ENCODE measurements at regions of chr10 and their contacts with region 1.

Region 1: DNA sequence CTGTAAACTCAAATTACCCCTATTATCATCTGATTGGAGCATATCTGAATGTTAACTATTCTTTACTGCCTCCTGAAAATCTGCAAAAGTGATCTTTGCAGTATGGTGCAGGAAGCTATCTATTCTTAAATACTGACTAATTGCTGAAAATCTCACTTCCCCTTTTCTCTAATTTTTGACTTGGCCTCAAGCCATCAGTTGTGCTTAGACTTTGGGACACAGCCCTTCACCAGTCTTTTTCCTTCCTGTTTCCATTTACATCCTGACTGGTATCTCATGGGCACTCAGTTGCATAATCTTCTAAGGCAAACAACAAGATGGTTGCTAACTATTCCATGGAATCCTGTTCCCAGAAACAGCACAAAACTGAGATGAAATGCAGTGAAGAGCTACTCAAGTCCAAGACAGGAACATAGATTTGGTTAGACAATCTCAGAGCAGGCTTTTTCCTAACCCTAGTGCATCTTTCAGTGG is 228.5 kb downstream of the SORCS1 start:
- DNase-seq: peak; percentile 93
- ATAC-seq: peak; percentile 75
- H3K4me3 ChIP-seq: no peak overlapping the region; the same call in 1 of the 2 replicates
- H3K27ac ChIP-seq: peak overlapping the region; percentile 67
- H3K4me1 ChIP-seq: peaks cover 42% of the 10 kb centered on the region
- H3K27me3 ChIP-seq: no peaks in the 10 kb centered on the region
- CTCF ChIP-seq: no peak
- EP300 ChIP-seq: peak; percentile 38 to 97; a peak in 3 of 4 replicates
- POLR2A ChIP-seq: no peak
- RAD21 ChIP-seq: no peak

Region 2: GRCh38 chr10:106519376-106520030 is 416.5 kb before region 1 on chr10:
- CTCF ChIA-PET with region 1: no interaction called
- POLR2A ChIA-PET with region 1: no interaction called
- RAD21 ChIA-PET with region 1: no interaction called
- SMC1A ChIA-PET with region 1: no interaction called
- in situ Hi-C with region 1: no loop called
- intact Hi-C with region 1: no loop called
- DNase-seq: no peak
- ATAC-seq: no peak
- H3K4me3 ChIP-seq: no peak overlapping the region
- H3K27ac ChIP-seq: no peak overlapping the region
- H3K4me1 ChIP-seq: no peaks in the 10 kb centered on the region
- H3K27me3 ChIP-seq: no peaks in the 10 kb centered on the region
- CTCF ChIP-seq: no peak
- EP300 ChIP-seq: no peak
- POLR2A ChIP-seq: no peak
- RAD21 ChIP-seq: no peak

Region 3: GRCh38 chr10:106866244-106866845 is 69.7 kb before region 1 on chr10:
- CTCF ChIA-PET with region 1: interaction called, 13 read pairs
- POLR2A ChIA-PET with region 1: no interaction called
- RAD21 ChIA-PET with region 1: interaction called, 16 read pairs
- SMC1A ChIA-PET with region 1: interaction called, 17 read pairs
- in situ Hi-C with region 1: no loop called
- intact Hi-C with region 1: loop called (anchors 5 kb)
- DNase-seq: peak; percentile 58
- ATAC-seq: peak; percentile 68
- H3K4me3 ChIP-seq: no peak overlapping the region
- H3K27ac ChIP-seq: 0 out of 2 replicates have a peak overlapping the region, but pooled peaks have one; percentile 15
- H3K4me1 ChIP-seq: peaks cover 6% of the 10 kb centered on the region; the same call in 1 of the 2 replicates
- H3K27me3 ChIP-seq: no peaks in the 10 kb centered on the region
- CTCF ChIP-seq: peak; percentile 11 to 24 (median 15); a peak in 1 of 6 replicates
- EP300 ChIP-seq: no peak
- POLR2A ChIP-seq: no peak
- RAD21 ChIP-seq: peak; percentile 47

Region 4: DNA sequence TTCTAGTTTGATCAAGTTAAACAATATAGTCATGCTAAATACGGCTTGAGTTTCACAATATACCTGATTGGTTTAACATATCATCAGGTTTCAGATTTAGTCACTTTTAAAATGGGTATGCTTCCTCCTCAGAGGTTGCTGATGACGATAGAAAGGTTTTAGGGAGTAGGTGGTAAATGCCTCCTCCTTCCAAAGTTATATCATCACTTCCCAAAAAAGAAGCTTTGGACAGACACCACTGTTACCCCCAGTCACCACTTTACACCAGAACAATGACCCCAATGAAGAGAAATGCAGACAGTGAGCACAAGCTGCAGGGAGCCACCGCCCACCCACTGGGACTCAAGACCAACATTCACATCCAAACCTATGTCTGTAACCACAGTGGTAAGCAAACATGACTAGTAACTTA is 16.1 kb before region 1 on chr10:
- CTCF ChIA-PET with region 1: interaction called, 4 read pairs
- POLR2A ChIA-PET with region 1: interaction called, 11 read pairs
- RAD21 ChIA-PET with region 1: interaction called, 7 read pairs
- SMC1A ChIA-PET with region 1: interaction called, 27 read pairs
- in situ Hi-C with region 1: no loop called
- intact Hi-C with region 1: no loop called
- DNase-seq: peak; percentile 55
- ATAC-seq: peak; percentile 93
- H3K4me3 ChIP-seq: peak overlapping the region; percentile 35
- H3K27ac ChIP-seq: peak overlapping the region; percentile 46; the same call in 1 of the 2 replicates
- H3K4me1 ChIP-seq: peaks cover 17% of the 10 kb centered on the region
- H3K27me3 ChIP-seq: no peaks in the 10 kb centered on the region
- CTCF ChIP-seq: no peak
- EP300 ChIP-seq: 0 out of 4 replicates have a peak, but pooled peaks of 1 of the 2 experiments have one; percentile 14
- POLR2A ChIP-seq: no peak
- RAD21 ChIP-seq: no peak

Region 5: GRCh38 chr10:106957823-106958588 is 22.0 kb after region 1 on chr10:
- CTCF ChIA-PET with region 1: interaction called, 4 read pairs
- POLR2A ChIA-PET with region 1: interaction called, 4 read pairs
- RAD21 ChIA-PET with region 1: interaction called, 7 read pairs
- SMC1A ChIA-PET with region 1: interaction called, 15 read pairs
- in situ Hi-C with region 1: no loop called
- intact Hi-C with region 1: no loop called
- DNase-seq: no peak
- ATAC-seq: no peak
- H3K4me3 ChIP-seq: no peak overlapping the region
- H3K27ac ChIP-seq: peak overlapping the region; percentile 29
- H3K4me1 ChIP-seq: peaks cover 13% of the 10 kb centered on the region
- H3K27me3 ChIP-seq: no peaks in the 10 kb centered on the region
- CTCF ChIP-seq: no peak
- EP300 ChIP-seq: no peak
- POLR2A ChIP-seq: no peak
- RAD21 ChIP-seq: no peak

Region 6: DNA sequence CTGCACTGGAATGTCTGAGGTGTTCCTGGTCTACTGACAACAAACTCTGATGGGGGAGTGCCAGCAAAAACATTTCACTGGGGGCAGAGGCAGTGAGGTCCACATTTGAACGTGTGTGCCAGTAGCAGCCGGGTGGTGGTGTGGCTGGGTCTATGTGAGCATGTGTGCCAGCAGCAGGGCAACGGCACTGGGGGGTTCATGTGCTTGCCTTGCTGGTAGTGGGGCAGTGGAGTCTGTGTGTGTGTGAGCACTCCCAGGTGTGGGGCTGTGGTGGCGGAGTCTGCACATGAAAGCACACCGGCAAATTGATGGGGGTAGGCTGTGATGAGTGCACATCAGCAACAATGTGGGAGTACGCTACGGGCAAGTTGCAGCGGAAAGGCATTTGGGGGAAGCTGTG is 277.8 kb after region 1 on chr10:
- CTCF ChIA-PET with region 1: no interaction called
- POLR2A ChIA-PET with region 1: no interaction called
- RAD21 ChIA-PET with region 1: no interaction called
- SMC1A ChIA-PET with region 1: no interaction called
- in situ Hi-C with region 1: no loop called
- intact Hi-C with region 1: no loop called
- DNase-seq: no peak
- ATAC-seq: no peak
- H3K4me3 ChIP-seq: no peak overlapping the region
- H3K27ac ChIP-seq: no peak overlapping the region
- H3K4me1 ChIP-seq: no peaks in the 10 kb centered on the region
- H3K27me3 ChIP-seq: no peaks in the 10 kb centered on the region
- CTCF ChIP-seq: no peak
- EP300 ChIP-seq: no peak
- POLR2A ChIP-seq: no peak
- RAD21 ChIP-seq: no peak